ENCODE measurements at regions of chr5 and their contacts with region 1.

Region 1: GRCh38 chr5:36734422-36734821 is 128.0 kb downstream of the SLC1A3 start:
- DNase-seq: no peak
- H3K4me3 ChIP-seq: no peak overlapping the region
- H3K27ac ChIP-seq: no peak overlapping the region
- H3K4me1 ChIP-seq: no peaks in the 10 kb centered on the region
- H3K27me3 ChIP-seq: no peaks in the 10 kb centered on the region
- CTCF ChIP-seq: no peak

Region 2: DNA sequence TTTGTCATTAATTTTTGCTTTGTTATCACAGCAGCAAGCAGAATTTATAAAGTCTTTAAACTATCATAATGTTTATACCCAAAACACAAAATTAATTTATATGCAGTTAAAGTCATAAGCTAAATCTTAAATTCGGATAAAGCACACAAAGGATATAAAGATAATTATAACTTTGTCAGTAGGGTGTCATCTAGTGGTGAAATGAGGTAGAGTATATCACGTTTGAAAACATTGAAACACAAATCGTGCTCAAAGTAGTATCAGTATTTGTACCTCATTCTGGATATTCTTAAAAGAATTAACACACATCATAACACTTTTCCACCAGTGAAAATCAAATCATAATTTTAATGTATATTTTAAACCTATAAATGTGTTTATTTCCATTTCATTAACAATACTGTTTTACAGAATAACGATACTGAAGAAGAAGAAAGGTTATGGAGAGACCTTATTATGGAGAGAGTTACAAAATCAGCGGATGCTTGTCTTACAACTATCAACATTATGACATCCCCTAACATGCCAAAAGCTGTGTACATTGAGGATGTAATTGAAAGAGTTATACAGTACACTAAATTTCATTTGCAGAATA is 271.6 kb after region 1 on chr5:
- intact Hi-C with region 1: loop called (anchors 5 kb)
- DNase-seq: no peak
- H3K4me3 ChIP-seq: no peak overlapping the region
- H3K27ac ChIP-seq: no peak overlapping the region
- H3K4me1 ChIP-seq: no peaks in the 10 kb centered on the region
- H3K27me3 ChIP-seq: no peaks in the 10 kb centered on the region
- CTCF ChIP-seq: peak; percentile 44

Measured in colonic mucosa (tissue), 4 donors.